Activated T-helper 2 cell treated with anti-CD3 and anti-CD28 coated beads, Interferon-gamma antibody, Interleukin-2, Interleukin-4, amounts not matched to agents 10 μg/mL and 5 μg/mL and 100 μg/mL, durations not matched to agents 14 hours and 24 hours and 36 hours (primary cell): ENCODE measurements at regions of chr10 and their contacts with region 1.

Region 1: GRCh38 chr10:88707429-88708285 is 1.6 kb downstream of the LIPK start:
- DNase-seq: no peak
- H3K4me3 Mint-ChIP-seq: no peak overlapping the region
- H3K27ac Mint-ChIP-seq: no peak overlapping the region
- H3K4me1 Mint-ChIP-seq: peaks cover 18% of the 10 kb centered on the region
- H3K27me3 Mint-ChIP-seq: peaks cover 29% of the 10 kb centered on the region

Region 2: DNA sequence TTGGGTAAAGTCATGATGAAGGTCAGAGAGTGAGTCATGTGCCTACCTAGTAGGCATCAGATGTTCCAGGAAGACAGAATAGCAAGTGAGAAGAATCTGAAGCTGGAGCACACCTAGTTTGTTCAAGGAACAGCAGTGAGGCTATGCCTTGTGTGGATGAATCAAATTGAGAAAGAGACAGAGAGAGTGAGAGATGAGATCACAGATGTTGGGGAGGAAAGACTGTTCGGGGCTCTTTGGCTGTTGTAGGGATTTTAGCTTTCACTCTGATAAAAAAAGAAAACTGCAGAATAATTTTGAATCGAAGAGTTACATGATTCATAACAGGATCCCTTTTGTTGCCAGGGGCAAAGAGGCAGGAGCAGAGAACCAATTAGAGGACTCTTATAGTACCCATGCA is 37.2 kb before region 1 on chr10:
- intact Hi-C with region 1: no loop called
- DNase-seq: no peak
- H3K4me3 Mint-ChIP-seq: no peak overlapping the region
- H3K27ac Mint-ChIP-seq: no peak overlapping the region
- H3K4me1 Mint-ChIP-seq: peaks cover 10% of the 10 kb centered on the region
- H3K27me3 Mint-ChIP-seq: peaks cover 34% of the 10 kb centered on the region

Region 3: GRCh38 chr10:88754287-88754686 is 46.6 kb after region 1 on chr10:
- intact Hi-C with region 1: loop called (anchors 1 kb)
- DNase-seq: no peak
- H3K4me3 Mint-ChIP-seq: no peak overlapping the region
- H3K27ac Mint-ChIP-seq: no peak overlapping the region
- H3K4me1 Mint-ChIP-seq: peaks cover 6% of the 10 kb centered on the region
- H3K27me3 Mint-ChIP-seq: peaks cover 43% of the 10 kb centered on the region

Region 4: GRCh38 chr10:88865281-88865876 is 157.7 kb after region 1 on chr10:
- intact Hi-C with region 1: no loop called
- DNase-seq: no peak
- H3K4me3 Mint-ChIP-seq: no peak overlapping the region
- H3K27ac Mint-ChIP-seq: no peak overlapping the region
- H3K4me1 Mint-ChIP-seq: peaks cover 8% of the 10 kb centered on the region
- H3K27me3 Mint-ChIP-seq: peaks cover 33% of the 10 kb centered on the region

Region 5: DNA sequence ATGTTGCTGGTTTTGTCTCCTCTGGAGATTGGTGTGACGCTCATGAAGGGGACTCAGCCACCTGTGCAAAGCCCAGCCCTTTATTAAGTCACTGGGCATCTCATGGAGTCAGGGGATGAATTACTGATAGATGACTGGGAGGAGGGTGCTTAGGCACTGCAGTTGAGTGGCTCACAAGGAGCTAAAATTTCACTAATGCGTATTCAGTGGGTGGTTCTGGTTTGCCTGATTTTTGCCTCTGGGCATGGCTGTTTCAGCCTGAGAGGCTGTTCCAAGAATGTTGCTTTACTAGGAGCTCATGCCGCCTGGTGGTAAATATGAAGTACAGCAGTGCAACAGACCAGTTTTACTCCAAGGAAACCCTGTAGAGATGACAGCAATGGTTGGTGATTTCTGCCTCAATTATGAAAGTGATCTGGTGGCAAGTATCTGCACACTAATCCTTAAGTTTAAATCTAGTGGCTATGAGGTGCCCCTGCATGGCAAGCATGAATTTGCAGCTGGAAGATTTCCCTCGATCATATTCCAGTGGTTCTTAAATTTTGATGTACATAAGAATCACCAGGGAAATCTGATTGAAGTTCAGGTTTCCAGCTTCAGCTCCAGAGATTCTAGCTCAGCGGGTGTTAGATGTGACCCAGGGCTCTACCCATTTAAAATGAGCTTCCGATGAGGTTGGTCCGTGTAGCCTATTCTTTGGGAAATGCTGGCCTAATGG is 225.0 kb after region 1 on chr10:
- intact Hi-C with region 1: no loop called
- DNase-seq: peak; percentile 27
- H3K4me3 Mint-ChIP-seq: no peak overlapping the region
- H3K27ac Mint-ChIP-seq: no peak overlapping the region
- H3K4me1 Mint-ChIP-seq: peaks cover 27% of the 10 kb centered on the region
- H3K27me3 Mint-ChIP-seq: no peaks in the 10 kb centered on the region